ENCODE measurements at regions of chr5 and their contacts with region 1.

Region 1: DNA sequence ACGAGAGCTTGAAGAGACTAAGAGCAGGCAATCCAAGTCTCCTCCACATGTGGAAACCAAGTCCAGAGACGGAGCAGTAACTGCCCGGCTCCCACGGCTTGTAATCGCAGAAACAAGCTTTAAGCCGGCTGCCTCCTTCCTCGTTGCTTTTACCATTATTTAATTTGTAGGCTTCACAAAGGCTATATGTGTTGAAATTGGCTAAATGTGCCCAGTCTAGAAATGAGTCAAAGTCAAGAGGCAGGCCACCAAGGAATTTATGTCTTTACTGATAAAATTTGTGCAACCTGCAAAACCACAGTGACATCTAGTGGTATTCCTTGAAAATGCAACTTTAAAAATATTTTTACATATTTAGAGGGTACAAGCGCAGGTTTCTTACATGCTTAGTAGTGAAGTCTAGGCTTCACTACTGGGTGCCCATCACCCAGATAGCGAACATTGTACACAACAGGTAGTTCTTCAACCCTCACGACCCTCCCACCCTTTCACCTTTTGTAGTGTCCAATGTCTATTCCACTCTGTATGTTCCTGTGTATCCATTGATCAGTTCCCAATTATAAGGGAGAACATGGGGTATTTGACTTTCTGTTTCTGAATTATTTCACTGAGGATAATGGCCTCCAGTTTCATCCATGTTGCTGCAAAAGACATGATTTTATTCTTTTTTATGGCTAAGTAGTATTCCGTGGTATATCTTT is 33.5 kb upstream of the EBF1 start:
- DNase-seq: peak in 1 of 2 donors; percentile 16
- ATAC-seq: peak; percentile 37 to 77 (median 52)
- H3K4me3 ChIP-seq: peak overlapping the region in 4 of 10 donors; percentile 15 to 37 (median 22)
- H3K27ac ChIP-seq: peak overlapping the region in 1 of 10 donors; percentile 15
- H3K4me1 ChIP-seq: no peaks in the 10 kb centered on the region
- H3K27me3 ChIP-seq: peaks cover 0 to 12% (median 0%) of the 10 kb centered on the region in 7 donors
- CTCF ChIP-seq: peak; percentile 70 to 88 (median 83)

Region 2: DNA sequence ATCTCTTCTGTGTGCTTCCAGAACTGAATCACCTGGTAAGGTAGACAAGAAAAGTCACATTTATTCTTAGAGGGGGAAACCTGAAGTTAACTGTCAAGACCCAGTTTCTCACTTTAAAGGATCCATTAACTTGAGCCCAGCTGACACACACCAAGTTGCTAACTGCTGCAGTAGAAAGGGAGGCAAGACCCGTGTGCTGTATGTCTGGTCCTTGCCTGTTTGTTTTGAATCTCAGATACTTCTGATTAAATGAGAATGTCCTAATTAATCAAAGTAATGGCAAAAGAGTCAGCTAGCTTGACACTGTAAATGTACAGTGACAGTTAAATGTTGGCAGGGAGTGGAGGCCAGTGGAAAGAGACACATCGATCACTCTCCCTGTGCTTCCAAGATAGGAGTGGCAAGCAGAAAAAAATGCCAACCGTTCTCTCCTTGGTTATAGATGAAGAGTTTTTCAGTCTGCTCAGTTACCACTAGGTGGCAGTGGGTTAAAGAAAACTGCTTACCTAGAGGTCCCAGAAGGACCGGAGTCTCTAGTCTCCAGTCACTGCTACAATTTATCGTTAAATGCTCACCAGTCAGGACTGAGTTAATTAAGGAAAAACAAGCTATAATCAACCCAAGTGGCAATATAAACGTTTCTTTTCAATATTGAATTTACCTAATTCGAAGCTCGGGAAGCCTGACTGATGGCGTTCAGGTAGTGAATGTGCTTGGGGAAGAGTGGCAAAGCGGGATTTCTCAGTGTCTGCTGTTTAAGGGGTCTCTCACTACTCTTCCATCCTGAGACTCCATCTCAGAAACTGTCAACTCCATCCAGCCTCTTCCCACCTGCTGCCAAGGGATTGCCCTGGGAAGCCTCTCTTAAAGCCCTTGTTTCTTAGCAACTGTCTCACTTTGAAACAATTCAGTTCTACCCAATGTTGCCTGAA is 1371.2 kb before region 1 on chr5:
- intact Hi-C with region 1: loop called in 9 of 10 experiments (anchors 2 to 10 kb)
- DNase-seq: peak in 1 of 2 donors; percentile 35
- ATAC-seq: peak; percentile 42 to 89 (median 68)
- H3K4me3 ChIP-seq: no peak overlapping the region
- H3K27ac ChIP-seq: no peak overlapping the region
- H3K4me1 ChIP-seq: peaks cover 0 to 5% (median 0%) of the 10 kb centered on the region in 9 donors
- H3K27me3 ChIP-seq: no peaks in the 10 kb centered on the region
- CTCF ChIP-seq: peak; percentile 46 to 85 (median 81)

Region 3: GRCh38 chr5:158013939-158014338 is 1119.3 kb before region 1 on chr5:
- intact Hi-C with region 1: loop called in 1 of 10 experiments (anchors 10 kb)
- DNase-seq: peak in 1 of 2 donors; percentile 32
- ATAC-seq: peak in 6 of 8 donors; percentile 47 to 71 (median 56)
- H3K4me3 ChIP-seq: no peak overlapping the region
- H3K27ac ChIP-seq: no peak overlapping the region
- H3K4me1 ChIP-seq: peaks cover 0 to 5% (median 0%) of the 10 kb centered on the region in 9 donors
- H3K27me3 ChIP-seq: peaks cover 0 to 4% (median 0%) of the 10 kb centered on the region in 7 donors
- CTCF ChIP-seq: peak in 7 of 9 donors; percentile 26 to 57 (median 44)

Region 4: DNA sequence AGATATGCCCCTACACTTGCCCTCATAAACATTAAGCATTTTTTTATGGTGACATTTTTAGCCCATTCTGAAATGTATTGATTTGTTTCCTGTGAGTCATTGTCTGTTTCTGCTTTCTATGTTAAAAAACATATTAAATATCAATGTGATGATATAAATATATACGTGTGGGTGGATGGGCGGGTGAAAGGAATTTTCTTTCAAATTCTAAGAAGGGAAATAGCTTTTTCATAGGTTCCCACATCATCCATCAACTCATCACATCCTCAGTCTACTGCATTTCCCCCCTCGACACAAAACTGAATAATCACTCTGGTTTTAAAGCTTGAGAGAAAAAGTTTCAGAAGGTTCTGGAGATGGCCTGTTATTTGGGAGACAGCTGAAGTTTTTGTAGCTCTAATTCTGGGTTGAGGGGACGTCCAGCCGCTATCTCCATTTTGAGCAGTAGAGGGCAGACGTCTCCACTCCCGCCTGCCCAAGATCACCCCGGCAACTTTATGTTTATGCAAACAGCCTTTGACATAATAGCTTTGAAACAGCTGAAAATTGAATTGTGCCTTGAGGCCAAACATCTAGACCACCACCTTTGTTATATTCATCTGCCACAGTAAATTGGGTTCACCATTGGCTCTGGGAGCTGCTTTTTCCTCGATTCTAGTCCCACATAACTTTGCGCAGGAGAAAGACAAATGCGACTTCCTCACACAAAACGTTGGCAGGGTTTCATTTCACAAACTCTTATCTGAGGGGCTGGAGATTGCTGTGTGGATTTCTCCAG is 1058.0 kb before region 1 on chr5:
- intact Hi-C with region 1: loop called in 6 of 10 experiments (anchors 5 to 10 kb)
- DNase-seq: peak; percentile 28 to 62
- ATAC-seq: peak; percentile 59 to 92 (median 82)
- H3K4me3 ChIP-seq: peak overlapping the region in 8 of 10 donors; percentile 17 to 43 (median 32)
- H3K27ac ChIP-seq: peak overlapping the region in 8 of 10 donors; percentile 15 to 78 (median 52)
- H3K4me1 ChIP-seq: peaks cover 0 to 16% (median 3%) of the 10 kb centered on the region in 9 donors
- H3K27me3 ChIP-seq: no peaks in the 10 kb centered on the region
- CTCF ChIP-seq: peak; percentile 67 to 92 (median 85)

Region 5: DNA sequence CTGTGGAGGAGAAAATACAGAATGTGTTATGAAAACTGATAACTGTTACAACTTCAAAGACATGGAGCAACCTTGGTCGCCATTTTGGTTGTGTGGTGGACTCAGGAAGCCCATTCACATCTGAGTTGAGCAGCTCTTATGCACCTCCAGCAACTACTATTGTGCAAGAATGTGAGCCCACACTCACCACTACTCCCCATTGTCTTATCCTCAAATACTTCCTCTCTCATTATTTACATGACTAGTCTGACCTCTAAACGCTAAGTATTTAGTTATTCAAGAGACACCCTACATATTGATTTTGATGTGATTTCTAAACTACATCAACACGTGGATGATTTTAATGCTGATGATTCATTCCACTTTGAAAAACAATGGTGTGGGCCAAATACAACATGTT is 757.7 kb before region 1 on chr5:
- intact Hi-C with region 1: no loop called
- DNase-seq: no peak
- ATAC-seq: no peak
- H3K4me3 ChIP-seq: no peak overlapping the region
- H3K27ac ChIP-seq: no peak overlapping the region
- H3K4me1 ChIP-seq: peaks cover 0 to 32% (median 7%) of the 10 kb centered on the region in 9 donors
- H3K27me3 ChIP-seq: peaks cover 0 to 8% (median 0%) of the 10 kb centered on the region in 7 donors
- CTCF ChIP-seq: no peak

Region 6: DNA sequence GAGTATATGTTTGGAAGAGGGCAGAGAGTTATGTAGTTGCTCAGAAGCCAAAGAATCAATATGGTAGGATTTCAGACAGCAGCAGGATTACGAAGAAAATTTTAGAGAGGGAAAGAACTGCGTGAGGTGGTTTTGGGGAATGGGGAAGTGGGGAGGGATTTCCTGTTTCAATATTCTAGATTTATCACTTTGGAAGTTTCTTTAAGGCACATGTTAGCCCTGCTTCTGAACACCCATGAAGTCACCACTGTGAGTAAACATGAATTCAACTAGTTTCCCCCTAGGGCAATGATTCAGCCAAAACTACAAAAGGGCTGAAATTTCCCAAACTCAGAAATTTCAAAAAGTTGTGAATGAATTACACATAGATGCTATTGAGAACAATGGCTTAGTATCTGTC is 165.7 kb before region 1 on chr5:
- intact Hi-C with region 1: no loop called
- DNase-seq: no peak
- ATAC-seq: peak in 2 of 8 donors; percentile 42 to 86
- H3K4me3 ChIP-seq: no peak overlapping the region
- H3K27ac ChIP-seq: peak overlapping the region in 6 of 10 donors; percentile 7 to 55 (median 33)
- H3K4me1 ChIP-seq: peaks cover 0 to 69% (median 17%) of the 10 kb centered on the region in 9 donors
- H3K27me3 ChIP-seq: no peaks in the 10 kb centered on the region
- CTCF ChIP-seq: no peak

Measured in heart right ventricle (tissue), 16 donors.